ENCODE measurements at regions of chr14 and their contacts with region 1.

Region 1: DNA sequence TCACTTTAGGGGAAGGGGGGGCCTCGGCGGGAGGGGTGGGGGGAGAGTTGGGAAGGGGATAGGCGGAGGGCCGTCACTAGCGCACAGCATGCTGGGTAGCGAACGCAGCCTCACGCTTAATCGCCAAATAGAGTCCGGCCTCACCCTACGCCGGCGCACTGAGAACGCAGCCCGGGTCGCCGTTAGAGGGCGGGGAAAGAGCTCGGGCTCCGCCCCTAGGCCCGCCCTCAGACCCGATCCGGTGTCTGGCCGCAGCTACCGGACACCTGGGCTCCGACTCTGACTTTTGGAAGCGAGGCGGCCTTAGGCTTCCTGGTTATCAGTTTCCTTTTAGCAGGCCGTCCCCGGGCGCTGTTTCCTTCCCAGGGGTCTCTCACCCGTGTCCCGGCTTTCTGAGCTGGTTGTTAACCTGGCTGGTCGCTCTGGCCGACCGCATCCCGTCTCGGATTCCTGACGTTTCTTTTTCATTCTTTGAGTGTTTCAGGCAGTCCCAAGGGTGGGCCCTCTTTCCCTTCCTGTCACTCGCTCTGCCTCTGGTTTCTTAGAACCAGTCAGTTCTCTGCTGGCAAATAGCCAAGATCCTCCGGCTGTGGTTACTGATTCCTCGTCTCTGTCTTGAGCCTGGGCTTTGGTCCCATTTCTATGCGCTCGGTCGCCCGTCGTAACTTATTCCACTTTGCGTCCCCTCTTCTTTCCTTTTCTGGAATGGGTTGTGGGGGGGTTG is 378 bp upstream of the STRN3 start:
- DNase-seq: peak; percentile 96
- H3K4me3 Mint-ChIP-seq: peak overlapping the region; percentile 94
- H3K27ac Mint-ChIP-seq: peak overlapping the region; percentile 98
- H3K4me1 Mint-ChIP-seq: peaks cover 32% of the 10 kb centered on the region
- H3K27me3 Mint-ChIP-seq: no peaks in the 10 kb centered on the region
- CTCF ChIP-seq: no peak

Region 2: GRCh38 chr14:30994681-30995620 is 31.6 kb before region 1 on chr14:
- CTCF ChIA-PET with region 1: no interaction called
- POLR2A ChIA-PET with region 1: interaction called, 16 read pairs
- intact Hi-C with region 1: no loop called
- DNase-seq: peak; percentile 16
- H3K4me3 Mint-ChIP-seq: peak overlapping the region; percentile 14
- H3K27ac Mint-ChIP-seq: peak overlapping the region; percentile 71
- H3K4me1 Mint-ChIP-seq: peaks cover 11% of the 10 kb centered on the region
- H3K27me3 Mint-ChIP-seq: no peaks in the 10 kb centered on the region
- CTCF ChIP-seq: no peak

Region 3: DNA sequence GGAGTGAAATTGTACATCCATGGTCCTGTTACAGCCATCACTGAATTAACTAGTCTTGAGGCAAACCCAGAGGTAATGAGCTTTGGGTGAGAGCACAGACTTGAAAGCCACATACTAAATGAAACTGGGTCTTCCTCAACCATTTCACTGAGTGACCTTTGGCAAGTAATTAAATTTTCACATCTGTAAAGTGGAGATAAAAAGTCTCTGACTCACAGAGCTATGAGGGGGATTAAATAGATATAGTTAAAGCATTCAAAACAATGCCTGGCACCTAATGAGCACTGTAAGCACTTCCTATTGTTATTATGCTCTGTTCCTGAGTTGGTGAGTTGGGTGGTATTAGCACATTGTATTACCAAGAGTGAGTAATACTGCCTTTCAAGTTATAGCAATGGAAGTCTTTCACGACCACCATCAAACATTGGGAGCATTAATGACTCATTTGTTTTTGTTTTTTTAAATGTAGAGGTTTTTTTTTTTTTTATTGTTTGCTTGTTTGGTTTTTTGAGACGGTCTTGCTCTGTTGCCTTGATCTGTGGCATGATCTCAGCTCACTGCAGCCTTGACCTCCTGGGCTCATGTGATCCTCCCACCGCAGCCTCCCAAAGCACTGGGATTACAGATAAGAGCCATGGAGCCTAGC is 12.1 kb after region 1 on chr14:
- CTCF ChIA-PET with region 1: no interaction called
- POLR2A ChIA-PET with region 1: interaction called, 38 read pairs
- intact Hi-C with region 1: no loop called
- DNase-seq: no peak
- H3K4me3 Mint-ChIP-seq: no peak overlapping the region
- H3K27ac Mint-ChIP-seq: peak overlapping the region; percentile 71
- H3K4me1 Mint-ChIP-seq: peaks cover 25% of the 10 kb centered on the region
- H3K27me3 Mint-ChIP-seq: no peaks in the 10 kb centered on the region
- CTCF ChIP-seq: no peak

Region 4: GRCh38 chr14:31059152-31059924 is 32.8 kb after region 1 on chr14:
- CTCF ChIA-PET with region 1: no interaction called
- POLR2A ChIA-PET with region 1: interaction called, 128 read pairs
- intact Hi-C with region 1: no loop called
- DNase-seq: peak; percentile 82
- H3K4me3 Mint-ChIP-seq: no peak overlapping the region
- H3K27ac Mint-ChIP-seq: peak overlapping the region; percentile 70
- H3K4me1 Mint-ChIP-seq: peaks cover 26% of the 10 kb centered on the region
- H3K27me3 Mint-ChIP-seq: no peaks in the 10 kb centered on the region
- CTCF ChIP-seq: no peak

Region 5: DNA sequence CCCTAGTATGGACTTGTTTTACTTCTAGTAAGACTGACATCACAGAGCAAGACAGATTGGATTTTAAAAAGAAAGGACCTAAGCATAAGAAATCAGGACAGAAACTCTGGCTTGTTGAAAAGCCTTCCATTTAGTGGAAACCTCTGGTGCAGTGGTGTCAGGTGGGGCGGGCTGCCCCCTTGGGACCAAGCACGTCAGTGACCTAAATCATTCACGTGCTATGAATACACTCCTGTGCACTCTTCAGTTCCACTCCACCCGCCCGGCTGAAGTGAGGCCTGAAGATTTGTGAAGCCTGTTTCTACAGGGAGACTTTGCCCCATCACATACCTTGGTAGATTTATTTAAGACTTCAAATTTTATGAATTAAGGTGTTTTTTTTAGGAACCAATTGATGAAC is 57.8 kb after region 1 on chr14:
- CTCF ChIA-PET with region 1: interaction called, 9 read pairs
- POLR2A ChIA-PET with region 1: interaction called, 6 read pairs
- intact Hi-C with region 1: loop called (anchors 1 kb)
- DNase-seq: no peak
- H3K4me3 Mint-ChIP-seq: no peak overlapping the region
- H3K27ac Mint-ChIP-seq: no peak overlapping the region
- H3K4me1 Mint-ChIP-seq: no peaks in the 10 kb centered on the region
- H3K27me3 Mint-ChIP-seq: no peaks in the 10 kb centered on the region
- CTCF ChIP-seq: no peak

Region 6: DNA sequence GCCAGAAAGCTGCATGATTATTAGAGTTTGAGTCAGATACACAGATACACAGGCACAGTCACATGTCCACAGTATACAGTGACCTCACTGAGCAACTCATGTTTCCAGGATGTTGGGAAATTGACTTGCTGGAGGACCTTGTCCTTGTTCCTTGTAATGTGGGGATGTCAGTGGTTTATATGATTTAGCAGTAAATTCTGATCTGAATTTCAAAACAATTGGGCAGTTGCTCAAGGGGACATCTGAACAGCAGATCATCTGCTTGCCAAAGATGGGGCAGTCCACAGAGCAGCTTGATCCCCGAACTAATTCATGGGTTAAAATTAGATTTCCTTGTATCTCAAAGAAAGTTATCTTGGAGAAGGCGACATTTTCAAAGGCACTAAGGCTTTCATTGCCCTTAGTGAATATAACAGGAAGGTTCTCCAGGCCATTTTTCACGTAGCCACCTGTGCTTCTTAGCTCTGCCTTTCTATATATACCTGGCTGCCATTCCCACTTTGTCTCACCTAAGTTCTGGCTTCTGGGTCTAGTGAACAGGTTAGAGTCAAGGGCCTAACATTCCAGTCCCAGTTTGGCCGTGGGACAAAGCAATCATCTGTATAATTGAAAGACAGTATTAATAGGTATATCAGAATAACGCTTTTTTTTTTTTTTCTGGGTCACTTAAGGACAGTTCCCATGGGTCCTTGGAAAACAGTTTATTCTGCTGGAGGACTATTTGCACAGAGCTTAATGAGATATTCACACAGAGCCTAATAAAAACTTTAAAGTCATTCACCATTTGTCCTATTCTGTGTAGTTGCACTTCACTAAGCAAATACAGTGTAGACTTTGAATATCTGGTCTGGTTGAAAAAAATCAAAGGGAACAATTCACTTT is 64.6 kb after region 1 on chr14:
- CTCF ChIA-PET with region 1: interaction called, 3 read pairs
- POLR2A ChIA-PET with region 1: interaction called, 10 read pairs
- intact Hi-C with region 1: no loop called
- DNase-seq: peak; percentile 86
- H3K4me3 Mint-ChIP-seq: no peak overlapping the region
- H3K27ac Mint-ChIP-seq: peak overlapping the region; percentile 96
- H3K4me1 Mint-ChIP-seq: peaks cover 12% of the 10 kb centered on the region
- H3K27me3 Mint-ChIP-seq: no peaks in the 10 kb centered on the region
- CTCF ChIP-seq: no peak

Measured in MCF 10A (cell line).